GM18951 (cell line): ENCODE measurements at regions of chr20 and their contacts with region 1.

Region 1: DNA sequence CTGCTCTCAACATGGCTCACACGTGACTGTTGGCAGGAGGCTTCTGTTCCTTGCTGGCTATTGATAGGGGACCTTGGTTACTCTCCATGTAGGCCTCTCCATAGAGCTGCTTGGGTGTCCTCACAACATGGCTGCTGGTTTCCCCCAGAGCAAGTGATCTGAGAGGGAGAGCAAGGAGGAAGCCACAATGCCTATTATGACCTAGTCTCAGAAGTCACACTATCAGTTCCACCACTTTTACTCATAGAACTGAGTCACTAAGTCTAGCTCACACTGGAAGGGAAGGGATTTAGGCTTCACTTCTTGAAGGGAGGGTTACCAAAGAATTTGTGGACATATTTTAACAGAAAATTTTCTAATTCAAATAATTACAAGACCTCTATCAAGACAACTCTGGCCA is 8.7 kb upstream of the NOP56 start:
- POLR2A ChIP-seq: no peak

Region 2: DNA sequence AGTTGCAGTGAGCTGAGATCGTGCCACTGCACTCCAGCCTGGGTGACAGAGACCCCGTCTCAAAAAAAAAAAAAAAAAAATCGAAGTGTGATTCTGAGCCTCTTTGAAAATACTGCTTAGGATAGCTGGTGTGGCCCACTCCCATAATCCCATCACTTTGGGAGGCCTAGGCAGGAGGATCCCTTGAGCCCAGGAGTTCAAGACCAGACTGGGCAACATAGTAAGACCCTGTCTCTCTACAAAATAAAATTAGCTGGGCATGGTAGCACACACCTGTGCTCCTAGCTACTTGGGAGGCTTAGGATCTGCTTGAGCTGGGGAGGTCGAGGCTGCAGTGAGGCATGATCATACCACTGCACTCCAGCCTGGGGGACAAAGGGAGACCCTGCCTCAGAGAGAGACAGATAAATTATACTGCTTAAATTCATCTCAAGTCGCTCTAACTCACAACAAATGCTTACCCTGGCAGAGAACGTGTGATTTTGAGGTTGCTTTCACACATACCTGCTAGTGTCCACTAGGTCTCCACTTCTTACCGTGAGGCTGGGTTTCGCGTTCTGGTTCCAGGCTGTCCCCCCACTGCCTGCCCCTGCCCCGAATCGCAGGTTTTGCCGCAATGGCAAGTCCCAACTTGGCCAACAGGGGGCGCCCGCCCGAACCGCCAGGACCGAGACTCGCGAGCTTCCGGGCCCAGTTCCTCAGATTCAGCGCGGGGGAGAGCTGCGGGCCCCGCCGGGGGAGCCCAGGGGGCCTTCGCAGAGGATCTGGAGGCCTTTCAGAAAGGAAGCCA is 119.6 kb before region 1 on chr20:
- in situ Hi-C with region 1: loop called (anchors 10 kb)
- POLR2A ChIP-seq: peak; percentile 60